ENCODE measurements at regions of chr6 and their contacts with region 1.

Region 1: GRCh38 chr6:45421709-45422502 is 44.2 kb upstream of the SUPT3H start:
- DNase-seq: peak in 2 of 3 donors; percentile 45 to 47
- H3K4me3 ChIP-seq: peak overlapping the region; percentile 83 to 98 (median 97)
- H3K4me3 Mint-ChIP-seq: peak overlapping the region; percentile 99 to 100
- H3K27ac ChIP-seq: peak overlapping the region; percentile 59 to 88
- H3K27ac Mint-ChIP-seq: peak overlapping the region; percentile 74 to 92 (median 88)
- H3K4me1 ChIP-seq: peaks cover 29 to 45% of the 10 kb centered on the region in 2 donors
- H3K4me1 Mint-ChIP-seq: peaks cover 40% of the 10 kb centered on the region
- H3K27me3 ChIP-seq: peaks cover 0 to 12% of the 10 kb centered on the region in 2 donors
- H3K27me3 Mint-ChIP-seq: peaks cover 9 to 20% (median 17%) of the 10 kb centered on the region in 3 donors
- CTCF ChIP-seq: no peak

Region 2: GRCh38 chr6:45377554-45378333 is 44.2 kb before region 1 on chr6 and contains the start of gene SUPT3H:
- intact Hi-C with region 1: loop called in 1 of 2 experiments (anchors 5 kb)
- DNase-seq: peak; percentile 86 to 89 (median 88)
- H3K4me3 ChIP-seq: peak within 1 kb of the TSS; percentile 85 to 97 (median 92)
- H3K4me3 Mint-ChIP-seq: peak within 1 kb of the TSS; percentile 97 to 98
- H3K27ac ChIP-seq: peak within 1 kb of the TSS; percentile 98
- H3K27ac Mint-ChIP-seq: peak within 1 kb of the TSS; percentile 97 to 98 (median 98)
- H3K4me1 ChIP-seq: peaks cover 14 to 24% of the 10 kb centered on the region in 2 donors
- H3K4me1 Mint-ChIP-seq: peaks cover 24% of the 10 kb centered on the region
- H3K27me3 ChIP-seq: no peaks in the 10 kb centered on the region
- H3K27me3 Mint-ChIP-seq: no peaks in the 10 kb centered on the region
- CTCF ChIP-seq: no peak
- polyA plus RNA-seq, gene SUPT3H: 2.4 to 3.5 (median 2.5) TPM

Region 3: GRCh38 chr6:45479834-45480751 is 58.2 kb after region 1 on chr6:
- intact Hi-C with region 1: loop called (anchors 10 kb)
- DNase-seq: peak; percentile 21 to 39 (median 31)
- H3K4me3 ChIP-seq: no peak overlapping the region
- H3K4me3 Mint-ChIP-seq: no peak overlapping the region
- H3K27ac ChIP-seq: peak overlapping the region in 1 of 2 donors; percentile 15
- H3K27ac Mint-ChIP-seq: peak overlapping the region in 4 of 7 donors; percentile 4 to 40 (median 30)
- H3K4me1 ChIP-seq: peaks cover 18 to 31% of the 10 kb centered on the region in 2 donors
- H3K4me1 Mint-ChIP-seq: peaks cover 20% of the 10 kb centered on the region
- H3K27me3 ChIP-seq: no peaks in the 10 kb centered on the region
- H3K27me3 Mint-ChIP-seq: no peaks in the 10 kb centered on the region
- CTCF ChIP-seq: no peak

Region 4: GRCh38 chr6:45677381-45678284 is 255.7 kb after region 1 on chr6:
- intact Hi-C with region 1: loop called in 1 of 2 experiments (anchors 10 kb)
- DNase-seq: peak; percentile 63 to 80 (median 68)
- H3K4me3 ChIP-seq: peak overlapping the region in 2 of 3 experiments; percentile 11 to 45
- H3K4me3 Mint-ChIP-seq: peak overlapping the region; percentile 64 to 80
- H3K27ac ChIP-seq: peak overlapping the region in 1 of 2 donors; percentile 56
- H3K27ac Mint-ChIP-seq: peak overlapping the region; percentile 37 to 91 (median 66)
- H3K4me1 ChIP-seq: peaks cover 17 to 20% of the 10 kb centered on the region in 2 donors
- H3K4me1 Mint-ChIP-seq: peaks cover 30% of the 10 kb centered on the region
- H3K27me3 ChIP-seq: no peaks in the 10 kb centered on the region
- H3K27me3 Mint-ChIP-seq: peaks cover 2 to 5% (median 3%) of the 10 kb centered on the region in 3 donors
- CTCF ChIP-seq: no peak

Measured in CD14-positive monocyte (primary cell).